Activated B cell treated with CpG ODN at 0.5 μM for 24 hours (primary cell): ENCODE measurements at regions of chr6 and their contacts with region 1.

Region 1: GRCh38 chr6:166999145-166999883 is at the start of gene CEP43:
- DNase-seq: peak; percentile 95
- ATAC-seq: peak; percentile 96
- H3K4me3 Mint-ChIP-seq: peak within 1 kb of the TSS; percentile 90
- H3K27ac Mint-ChIP-seq: peak within 1 kb of the TSS; percentile 66
- H3K4me1 Mint-ChIP-seq: peaks cover 29% of the 10 kb centered on the region
- H3K27me3 Mint-ChIP-seq: no peaks in the 10 kb centered on the region
- CTCF ChIP-seq: no peak
- total RNA-seq, gene CEP43: 26.8 and 31.0 TPM in 2 replicates

Region 2: DNA sequence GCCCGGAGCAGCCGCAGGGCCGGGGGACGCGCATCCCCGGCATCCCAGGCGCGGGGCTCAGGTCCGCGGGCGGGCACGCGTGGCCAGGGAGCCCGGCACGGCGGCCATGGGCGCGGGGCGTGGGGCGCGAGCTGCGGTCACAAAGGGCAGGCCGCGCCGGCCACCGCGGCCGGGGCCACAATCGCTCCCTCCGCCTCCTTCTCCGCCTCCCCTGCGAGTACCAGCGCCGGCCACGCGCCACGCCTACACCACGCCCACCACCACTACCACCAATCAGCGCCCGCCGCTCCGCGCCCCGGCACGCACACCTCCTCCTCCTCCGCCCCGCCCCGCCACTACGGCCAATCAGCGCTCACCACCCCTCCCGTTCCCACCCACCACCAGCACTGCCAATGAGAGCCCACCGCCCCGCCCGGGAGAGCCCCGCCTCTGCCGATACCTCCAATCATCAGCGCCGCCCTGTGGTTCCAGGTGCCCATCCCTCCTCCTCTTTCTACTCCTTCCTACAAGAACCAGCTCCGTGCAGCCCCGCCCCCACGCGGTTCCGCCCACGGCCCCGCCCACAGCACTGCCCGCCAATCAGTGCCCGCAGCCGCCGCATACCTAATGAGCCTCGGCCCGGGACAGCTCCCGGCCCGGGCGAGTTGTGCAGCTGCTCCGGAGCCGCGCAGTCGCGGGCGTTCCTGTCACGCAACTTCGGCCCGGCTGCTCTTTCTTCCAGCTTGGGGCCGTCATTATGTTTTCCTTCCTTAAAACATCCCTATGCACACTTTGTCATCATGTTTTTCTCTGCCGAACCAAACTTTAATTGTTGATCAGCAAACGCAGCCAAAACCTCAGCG is 372.1 kb before region 1 on chr6 and contains the start of gene RPS6KA2:
- CTCF ChIA-PET with region 1: no interaction called
- POLR2A ChIA-PET with region 1: no interaction called
- intact Hi-C with region 1: loop called (anchors 1 kb)
- DNase-seq: peak; percentile 100
- ATAC-seq: peak; percentile 93
- H3K4me3 Mint-ChIP-seq: peak within 1 kb of the TSS; percentile 91
- H3K27ac Mint-ChIP-seq: peak within 1 kb of the TSS; percentile 91
- H3K4me1 Mint-ChIP-seq: peaks cover 22% of the 10 kb centered on the region
- H3K27me3 Mint-ChIP-seq: peaks cover 32% of the 10 kb centered on the region
- CTCF ChIP-seq: no peak
- total RNA-seq, gene RPS6KA2: 13.9 and 14.4 TPM in 2 replicates

Region 3: GRCh38 chr6:166849749-166850183 is 149.5 kb before region 1 on chr6:
- CTCF ChIA-PET with region 1: no interaction called
- POLR2A ChIA-PET with region 1: no interaction called
- intact Hi-C with region 1: no loop called
- DNase-seq: peak; percentile 46
- ATAC-seq: peak; percentile 92
- H3K4me3 Mint-ChIP-seq: peak overlapping the region; percentile 47
- H3K27ac Mint-ChIP-seq: peak overlapping the region; percentile 47
- H3K4me1 Mint-ChIP-seq: peaks cover 70% of the 10 kb centered on the region
- H3K27me3 Mint-ChIP-seq: no peaks in the 10 kb centered on the region
- CTCF ChIP-seq: no peak

Region 4: DNA sequence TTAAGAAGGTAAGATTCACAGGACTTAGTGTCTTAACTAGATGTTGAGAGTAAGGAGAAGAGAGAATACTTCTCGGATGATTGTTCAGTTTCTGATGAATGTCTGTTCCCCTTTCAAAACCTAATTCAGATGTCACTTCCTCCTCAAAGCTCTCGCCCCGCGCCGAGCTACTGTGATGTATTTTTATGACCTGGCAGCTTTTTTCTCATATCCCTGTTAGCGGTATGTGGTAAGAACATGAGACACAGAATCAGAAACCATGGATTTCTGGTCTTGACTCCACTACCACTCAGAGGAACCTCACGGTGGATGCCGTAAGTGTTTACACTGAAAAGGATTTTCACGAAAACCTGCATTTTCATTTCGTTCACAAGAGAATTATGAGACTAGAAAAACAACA is 48.2 kb after region 1 on chr6:
- CTCF ChIA-PET with region 1: interaction called, 3 read pairs
- POLR2A ChIA-PET with region 1: interaction called, 13 read pairs
- intact Hi-C with region 1: loop called (anchors 1 kb)
- DNase-seq: peak; percentile 36
- ATAC-seq: peak; percentile 85
- H3K4me3 Mint-ChIP-seq: peak overlapping the region; percentile 76
- H3K27ac Mint-ChIP-seq: peak overlapping the region; percentile 96
- H3K4me1 Mint-ChIP-seq: peaks cover 68% of the 10 kb centered on the region
- H3K27me3 Mint-ChIP-seq: no peaks in the 10 kb centered on the region
- CTCF ChIP-seq: no peak

Region 5: DNA sequence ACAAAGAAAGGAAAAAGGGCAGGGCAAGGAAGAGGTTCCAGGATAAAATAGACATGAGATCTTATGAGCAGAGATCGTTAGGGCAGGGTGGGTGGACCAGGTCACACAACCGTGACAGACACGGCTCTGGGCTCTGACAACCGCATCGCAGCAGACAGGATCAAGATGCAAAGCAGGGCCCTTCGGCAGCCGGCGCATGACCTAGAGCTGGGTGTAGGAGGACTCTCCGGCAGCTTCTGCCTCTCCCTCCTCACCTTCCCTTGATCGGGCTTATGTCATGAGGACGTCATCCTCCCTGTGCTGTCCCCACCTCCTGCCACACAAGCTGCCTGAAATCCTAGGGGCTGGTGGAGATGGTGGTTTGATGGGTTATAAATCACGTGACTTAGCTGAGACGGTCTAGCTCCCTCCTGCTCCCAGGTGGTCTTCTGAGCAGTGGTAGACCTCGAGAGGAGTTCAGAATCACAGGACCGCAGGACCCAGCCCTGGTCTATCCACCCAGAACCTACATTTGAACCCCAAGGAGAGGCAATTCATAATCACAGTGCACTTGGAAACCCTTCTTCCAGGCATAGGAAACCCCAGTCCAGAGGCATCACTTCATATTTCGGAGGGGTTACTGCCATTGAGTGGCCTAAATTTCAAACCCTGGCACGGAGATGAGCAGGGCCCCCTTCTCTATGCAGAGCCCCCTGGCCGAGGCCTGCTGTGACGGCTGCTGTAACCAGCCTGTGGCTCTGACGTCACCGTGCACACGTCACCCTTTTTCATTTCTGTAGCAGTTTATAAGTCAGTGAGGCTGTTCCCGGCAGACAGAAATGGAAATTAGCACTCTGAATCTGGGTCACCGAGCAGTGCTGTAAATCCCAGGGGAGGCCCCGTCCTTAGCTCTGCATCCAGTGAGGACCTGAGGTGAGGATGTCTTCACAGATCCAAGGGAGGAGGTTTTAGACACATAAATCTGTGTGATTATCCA is 114.9 kb after region 1 on chr6:
- CTCF ChIA-PET with region 1: interaction called, 6 read pairs
- POLR2A ChIA-PET with region 1: interaction called, 17 read pairs
- intact Hi-C with region 1: loop called (anchors 1 kb)
- DNase-seq: peak; percentile 75
- ATAC-seq: peak; percentile 78
- H3K4me3 Mint-ChIP-seq: peak overlapping the region; percentile 84
- H3K27ac Mint-ChIP-seq: peak overlapping the region; percentile 94
- H3K4me1 Mint-ChIP-seq: peaks cover 96% of the 10 kb centered on the region
- H3K27me3 Mint-ChIP-seq: no peaks in the 10 kb centered on the region
- CTCF ChIP-seq: no peak

Region 6: GRCh38 chr6:167153521-167153959 is 154.2 kb after region 1 on chr6:
- CTCF ChIA-PET with region 1: no interaction called
- POLR2A ChIA-PET with region 1: no interaction called
- intact Hi-C with region 1: loop called (anchors 1 kb)
- DNase-seq: no peak
- ATAC-seq: peak; percentile 62
- H3K4me3 Mint-ChIP-seq: peak overlapping the region; percentile 88
- H3K27ac Mint-ChIP-seq: peak overlapping the region; percentile 88
- H3K4me1 Mint-ChIP-seq: peaks cover 58% of the 10 kb centered on the region
- H3K27me3 Mint-ChIP-seq: no peaks in the 10 kb centered on the region
- CTCF ChIP-seq: no peak